Activated CD8-positive, alpha-beta T cell treated with anti-CD3 and anti-CD28 coated beads for 36 hours (primary cell): ENCODE measurements at regions of chr1 and their contacts with region 1.

Region 1: GRCh38 chr1:111222308-111223125 is 5.0 kb upstream of the CHI3L2 start:
- DNase-seq: peak; percentile 86
- ATAC-seq: peak; percentile 12
- H3K4me3 Mint-ChIP-seq: peak overlapping the region; percentile 64
- H3K27ac Mint-ChIP-seq: peak overlapping the region; percentile 93
- H3K4me1 Mint-ChIP-seq: peaks cover 89% of the 10 kb centered on the region
- H3K27me3 Mint-ChIP-seq: no peaks in the 10 kb centered on the region
- CTCF ChIP-seq: peak; percentile 95

Region 2: GRCh38 chr1:110360431-110360830 is 862.1 kb before region 1 on chr1:
- CTCF ChIA-PET with region 1: no interaction called
- POLR2A ChIA-PET with region 1: no interaction called
- intact Hi-C with region 1: no loop called
- DNase-seq: no peak
- ATAC-seq: no peak
- H3K4me3 Mint-ChIP-seq: no peak overlapping the region
- H3K27ac Mint-ChIP-seq: no peak overlapping the region
- H3K4me1 Mint-ChIP-seq: peaks cover 22% of the 10 kb centered on the region
- H3K27me3 Mint-ChIP-seq: no peaks in the 10 kb centered on the region
- CTCF ChIP-seq: no peak

Region 3: DNA sequence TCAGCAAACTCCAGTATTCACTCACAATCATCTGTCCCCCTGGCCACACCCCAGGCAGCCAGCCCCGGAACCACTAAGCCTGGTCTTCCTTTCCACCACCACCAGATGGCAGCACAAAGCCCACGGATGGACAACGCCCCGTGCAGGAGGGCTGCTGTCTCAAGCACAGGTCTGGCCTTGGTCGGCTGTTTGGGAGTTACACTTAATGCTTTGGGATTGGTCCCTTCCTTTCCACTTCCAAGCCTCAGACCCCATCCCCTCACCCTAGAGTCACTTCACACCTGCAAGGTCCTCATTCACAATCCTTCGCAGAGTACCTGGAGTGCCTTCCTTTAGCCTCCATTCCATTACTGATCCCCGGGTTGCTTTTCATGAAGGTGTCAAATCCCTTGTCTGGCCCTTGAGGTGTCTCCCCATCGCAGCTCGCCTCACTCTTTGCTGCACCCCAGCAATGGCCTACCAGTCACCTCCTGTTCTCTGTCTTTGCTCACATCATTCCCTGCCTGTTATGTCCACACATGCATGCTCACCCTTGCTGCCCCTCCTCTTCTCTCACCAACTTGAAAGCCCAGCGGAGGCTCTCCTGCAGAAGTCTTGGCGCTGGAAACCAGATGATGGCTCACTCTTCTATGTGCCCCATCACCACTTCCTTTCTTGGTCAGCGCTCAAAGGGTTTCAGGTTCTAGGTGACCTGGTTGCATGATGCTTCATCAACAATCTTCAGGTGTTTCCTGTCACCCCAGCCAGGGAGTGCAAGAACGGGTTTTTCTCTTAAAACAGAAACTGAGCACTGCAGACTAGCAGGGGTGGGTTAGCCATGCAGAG is 591.5 kb before region 1 on chr1:
- CTCF ChIA-PET with region 1: no interaction called
- POLR2A ChIA-PET with region 1: no interaction called
- intact Hi-C with region 1: loop called (anchors 5 kb)
- DNase-seq: peak; percentile 89
- ATAC-seq: peak; percentile 69
- H3K4me3 Mint-ChIP-seq: no peak overlapping the region
- H3K27ac Mint-ChIP-seq: no peak overlapping the region
- H3K4me1 Mint-ChIP-seq: peaks cover 52% of the 10 kb centered on the region
- H3K27me3 Mint-ChIP-seq: no peaks in the 10 kb centered on the region
- CTCF ChIP-seq: peak; percentile 85

Region 4: DNA sequence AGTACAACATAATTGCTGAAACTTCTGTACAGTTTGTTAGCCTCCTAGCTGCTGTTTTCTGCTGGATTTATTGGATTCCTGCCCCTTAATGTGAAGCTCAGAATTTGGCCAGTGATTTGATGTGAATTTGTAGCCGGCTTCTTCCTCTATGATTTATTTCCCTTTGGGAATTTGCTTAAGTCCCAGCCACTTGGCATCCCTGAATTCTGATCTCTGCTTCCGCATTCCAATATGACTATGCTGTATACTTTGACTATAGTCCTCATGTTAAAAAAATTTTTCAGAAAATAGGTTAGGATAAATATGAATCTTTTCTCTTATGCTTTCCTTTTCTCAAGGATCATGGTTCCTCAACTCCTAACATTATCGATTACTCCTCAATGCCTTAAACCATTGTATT is 246.4 kb before region 1 on chr1:
- CTCF ChIA-PET with region 1: no interaction called
- POLR2A ChIA-PET with region 1: no interaction called
- intact Hi-C with region 1: no loop called
- DNase-seq: no peak
- ATAC-seq: no peak
- H3K4me3 Mint-ChIP-seq: no peak overlapping the region
- H3K27ac Mint-ChIP-seq: no peak overlapping the region
- H3K4me1 Mint-ChIP-seq: no peaks in the 10 kb centered on the region
- H3K27me3 Mint-ChIP-seq: peaks cover 13% of the 10 kb centered on the region
- CTCF ChIP-seq: no peak

Region 5: DNA sequence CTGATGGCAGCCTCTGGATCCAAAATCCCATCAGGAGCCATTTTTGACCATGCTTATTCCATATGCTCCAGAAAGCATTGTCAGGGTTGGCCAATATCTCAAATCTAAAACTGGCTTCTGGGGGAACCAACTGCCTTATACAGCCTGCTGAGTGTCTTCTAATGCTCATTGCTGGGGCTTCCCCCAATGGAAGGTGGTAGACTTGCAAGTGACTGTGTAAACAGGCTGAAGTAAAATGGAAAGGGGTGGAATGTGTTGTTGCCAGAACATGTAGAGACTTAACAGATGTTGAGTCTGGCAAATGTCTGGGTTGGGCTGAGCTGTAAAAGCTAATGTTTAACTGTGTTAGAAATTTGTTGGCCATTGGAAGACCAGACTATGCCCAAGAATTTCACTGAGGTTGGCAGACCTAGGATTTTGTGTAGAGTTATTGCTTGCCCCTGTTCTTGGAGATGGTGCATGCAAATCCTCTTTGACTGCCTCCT is 236.1 kb before region 1 on chr1:
- CTCF ChIA-PET with region 1: no interaction called
- POLR2A ChIA-PET with region 1: no interaction called
- intact Hi-C with region 1: no loop called
- DNase-seq: no peak
- ATAC-seq: no peak
- H3K4me3 Mint-ChIP-seq: no peak overlapping the region
- H3K27ac Mint-ChIP-seq: no peak overlapping the region
- H3K4me1 Mint-ChIP-seq: peaks cover 11% of the 10 kb centered on the region
- H3K27me3 Mint-ChIP-seq: peaks cover 4% of the 10 kb centered on the region
- CTCF ChIP-seq: no peak

Region 6: GRCh38 chr1:111197598-111198284 is 24.8 kb before region 1 on chr1:
- CTCF ChIA-PET with region 1: interaction called, 150 read pairs
- POLR2A ChIA-PET with region 1: interaction called, 245 read pairs
- intact Hi-C with region 1: loop called (anchors 5 kb)
- DNase-seq: peak; percentile 72
- ATAC-seq: peak; percentile 18
- H3K4me3 Mint-ChIP-seq: peak overlapping the region; percentile 99
- H3K27ac Mint-ChIP-seq: peak overlapping the region; percentile 98
- H3K4me1 Mint-ChIP-seq: peaks cover 70% of the 10 kb centered on the region
- H3K27me3 Mint-ChIP-seq: no peaks in the 10 kb centered on the region
- CTCF ChIP-seq: peak; percentile 24

Region 7: DNA sequence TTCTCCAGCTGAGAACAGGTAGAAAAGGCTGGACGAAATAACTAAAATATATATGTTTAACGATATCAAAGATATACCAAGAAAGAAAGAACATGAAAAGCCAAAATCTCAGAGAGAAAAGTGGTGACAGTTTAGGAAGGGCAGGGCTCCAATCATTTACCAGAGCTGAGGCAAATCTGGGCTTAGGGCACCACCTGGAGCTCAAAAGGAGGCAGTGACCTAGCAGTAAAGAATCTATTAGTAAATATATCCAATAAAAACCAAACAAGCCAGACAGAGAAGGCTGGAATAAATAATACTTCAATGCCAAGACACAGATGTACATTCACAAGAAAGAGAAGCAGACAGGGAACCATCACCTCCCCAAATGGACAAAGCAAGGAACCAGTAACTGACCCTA is 111.7 kb after region 1 on chr1:
- CTCF ChIA-PET with region 1: interaction called, 78 read pairs
- POLR2A ChIA-PET with region 1: no interaction called
- intact Hi-C with region 1: loop called (anchors 2 kb)
- DNase-seq: peak; percentile 64
- ATAC-seq: peak; percentile 71
- H3K4me3 Mint-ChIP-seq: no peak overlapping the region
- H3K27ac Mint-ChIP-seq: no peak overlapping the region
- H3K4me1 Mint-ChIP-seq: no peaks in the 10 kb centered on the region
- H3K27me3 Mint-ChIP-seq: no peaks in the 10 kb centered on the region
- CTCF ChIP-seq: peak; percentile 72

Region 8: GRCh38 chr1:111406321-111406768 is 183.8 kb after region 1 on chr1:
- CTCF ChIA-PET with region 1: interaction called, 109 read pairs
- POLR2A ChIA-PET with region 1: no interaction called
- intact Hi-C with region 1: loop called (anchors 2 kb)
- DNase-seq: peak; percentile 51
- ATAC-seq: peak; percentile 93
- H3K4me3 Mint-ChIP-seq: peak overlapping the region; percentile 30
- H3K27ac Mint-ChIP-seq: peak overlapping the region; percentile 48
- H3K4me1 Mint-ChIP-seq: peaks cover 33% of the 10 kb centered on the region
- H3K27me3 Mint-ChIP-seq: no peaks in the 10 kb centered on the region
- CTCF ChIP-seq: no peak

Region 9: GRCh38 chr1:111603979-111604378 is 381.5 kb after region 1 on chr1:
- CTCF ChIA-PET with region 1: interaction called, 3 read pairs
- POLR2A ChIA-PET with region 1: no interaction called
- intact Hi-C with region 1: loop called (anchors 5 kb)
- DNase-seq: peak; percentile 93
- ATAC-seq: peak; percentile 85
- H3K4me3 Mint-ChIP-seq: peak overlapping the region; percentile 36
- H3K27ac Mint-ChIP-seq: peak overlapping the region; percentile 90
- H3K4me1 Mint-ChIP-seq: peaks cover 73% of the 10 kb centered on the region
- H3K27me3 Mint-ChIP-seq: no peaks in the 10 kb centered on the region
- CTCF ChIP-seq: no peak